ENCODE measurements at regions of chr5 and their contacts with region 1.

Region 1: GRCh38 chr5:90386099-90386710 is 23.4 kb downstream of the CETN3 start:
- DNase-seq: peak; percentile 24
- ATAC-seq: no peak
- H3K4me3 ChIP-seq: no peak overlapping the region
- H3K27ac ChIP-seq: no peak overlapping the region
- H3K4me1 ChIP-seq: no peaks in the 10 kb centered on the region
- H3K27me3 ChIP-seq: no peaks in the 10 kb centered on the region
- CTCF ChIP-seq: peak; percentile 34
- EP300 ChIP-seq: no peak
- POLR2A ChIP-seq: no peak
- RAD21 ChIP-seq: no peak

Region 2: DNA sequence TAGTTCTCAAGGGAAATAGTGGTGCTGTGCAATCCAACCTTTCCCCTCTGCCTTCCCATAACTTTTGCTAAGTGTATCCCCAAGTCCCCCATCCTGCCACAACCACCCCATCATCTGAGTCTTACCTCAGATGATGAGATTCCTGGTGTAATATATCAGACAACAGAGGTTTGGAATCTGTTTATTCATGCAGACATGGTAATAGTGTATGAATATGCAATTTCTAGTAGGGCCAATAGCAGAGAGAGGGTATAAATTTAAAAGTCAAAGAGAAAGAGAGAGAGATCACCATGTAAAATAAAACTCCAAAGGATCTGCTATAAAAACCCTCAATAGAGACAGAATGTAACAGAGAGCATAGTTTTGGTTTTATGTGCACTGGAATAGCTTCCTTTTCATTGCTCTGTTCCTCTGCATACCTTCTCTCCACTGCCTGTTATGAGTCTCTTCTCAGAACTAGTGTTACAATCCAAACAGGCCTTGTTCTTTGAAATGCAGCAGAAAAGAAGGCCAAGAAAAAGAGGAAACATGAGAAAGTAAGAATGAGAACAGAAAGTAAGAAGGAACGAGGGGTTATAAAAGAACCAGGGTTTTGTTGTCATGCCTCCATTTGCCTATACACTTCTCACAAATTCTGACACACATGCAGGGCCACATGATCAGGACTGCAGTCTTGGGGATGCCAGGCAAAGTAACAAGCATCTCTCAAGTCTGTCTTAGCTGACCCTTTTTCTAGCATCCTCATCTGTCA is 254.6 kb before region 1 on chr5:
- CTCF ChIA-PET with region 1: interaction called, 4 read pairs
- POLR2A ChIA-PET with region 1: no interaction called
- in situ Hi-C with region 1: loop called (anchors 10 kb)
- intact Hi-C with region 1: loop called (anchors 1 kb)
- DNase-seq: no peak
- ATAC-seq: no peak
- H3K4me3 ChIP-seq: no peak overlapping the region
- H3K27ac ChIP-seq: no peak overlapping the region
- H3K4me1 ChIP-seq: no peaks in the 10 kb centered on the region
- H3K27me3 ChIP-seq: no peaks in the 10 kb centered on the region; a peak in 1 of 5 replicates
- CTCF ChIP-seq: no peak
- EP300 ChIP-seq: no peak
- POLR2A ChIP-seq: no peak
- RAD21 ChIP-seq: no peak

Region 3: GRCh38 chr5:90264689-90265544 is 121.3 kb before region 1 on chr5:
- CTCF ChIA-PET with region 1: no interaction called
- POLR2A ChIA-PET with region 1: no interaction called
- in situ Hi-C with region 1: no loop called
- intact Hi-C with region 1: loop called (anchors 1 kb)
- DNase-seq: peak; percentile 35
- ATAC-seq: peak; percentile 77
- H3K4me3 ChIP-seq: no peak overlapping the region
- H3K27ac ChIP-seq: no peak overlapping the region
- H3K4me1 ChIP-seq: no peaks in the 10 kb centered on the region
- H3K27me3 ChIP-seq: no peaks in the 10 kb centered on the region; a peak in 1 of 5 replicates
- CTCF ChIP-seq: peak; percentile 78
- EP300 ChIP-seq: no peak
- POLR2A ChIP-seq: no peak
- RAD21 ChIP-seq: peak; percentile 69

Region 4: DNA sequence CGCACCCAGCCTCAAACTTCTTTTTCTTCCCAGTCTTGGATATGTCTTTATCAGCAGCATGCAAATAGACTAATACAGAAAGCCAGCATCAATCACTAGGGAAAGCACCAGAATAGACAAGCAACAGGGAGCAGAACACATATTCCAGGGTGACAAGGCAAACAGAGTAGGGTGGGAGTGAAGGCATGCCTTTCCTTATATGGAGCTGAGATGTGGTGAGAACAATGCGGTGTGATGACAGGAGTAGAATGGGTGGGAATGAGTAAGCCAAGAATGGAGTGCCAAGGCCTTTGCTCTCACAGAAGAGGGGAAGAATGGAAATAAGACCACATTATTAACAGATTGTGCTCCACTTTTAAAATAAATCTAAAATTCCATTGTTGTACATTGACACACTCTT is 92.3 kb before region 1 on chr5:
- CTCF ChIA-PET with region 1: interaction called, 4 read pairs
- POLR2A ChIA-PET with region 1: no interaction called
- in situ Hi-C with region 1: no loop called
- intact Hi-C with region 1: loop called (anchors 1 kb)
- DNase-seq: peak; percentile 25
- ATAC-seq: no peak
- H3K4me3 ChIP-seq: no peak overlapping the region
- H3K27ac ChIP-seq: no peak overlapping the region
- H3K4me1 ChIP-seq: no peaks in the 10 kb centered on the region
- H3K27me3 ChIP-seq: no peaks in the 10 kb centered on the region
- CTCF ChIP-seq: no peak
- EP300 ChIP-seq: no peak
- POLR2A ChIP-seq: no peak
- RAD21 ChIP-seq: no peak